ENCODE measurements at regions of chr1 and their contacts with region 1.

Region 1: DNA sequence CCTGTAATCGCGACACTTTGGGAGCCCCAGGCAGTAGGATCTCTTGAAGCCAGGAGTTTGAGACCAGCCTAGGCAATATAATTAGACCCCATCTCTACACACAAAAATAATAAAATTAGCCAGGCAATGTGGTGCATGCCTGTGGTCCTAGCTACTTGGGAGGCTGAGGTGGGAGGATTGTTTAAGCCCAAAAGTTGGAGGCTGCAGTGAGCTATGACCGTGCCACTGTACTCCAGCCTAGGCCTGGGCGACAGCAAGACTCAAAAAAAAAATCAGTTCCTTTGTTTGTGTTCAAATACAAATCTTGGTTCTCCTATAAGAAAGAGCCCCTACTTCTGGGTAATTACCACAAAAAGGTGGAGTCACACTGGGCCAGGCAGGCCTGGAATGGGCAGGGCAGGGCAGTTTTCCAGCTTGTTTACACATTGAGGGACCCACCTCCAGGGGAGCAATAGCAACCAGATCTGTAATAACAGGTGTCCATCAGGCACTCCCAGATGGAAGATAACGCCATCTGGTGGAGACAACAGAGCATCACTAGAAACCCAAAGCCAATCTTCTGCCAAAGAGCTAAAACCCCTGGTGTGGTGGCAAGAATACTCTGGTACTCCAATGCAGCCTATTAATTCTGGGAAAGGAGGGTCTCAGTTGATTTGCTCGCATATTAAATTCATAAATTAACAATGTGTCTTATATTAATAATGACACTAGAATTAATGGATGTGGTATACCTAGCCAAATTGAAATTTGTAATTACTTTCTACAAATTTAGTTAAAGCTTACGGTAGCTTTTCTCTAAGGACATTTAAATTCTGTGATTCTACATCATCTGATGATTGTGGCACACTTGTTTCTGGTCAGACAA is 13.2 kb downstream of the PPP1R15B start:
- DNase-seq: peak; percentile 81
- ATAC-seq: peak; percentile 100
- H3K4me3 Mint-ChIP-seq: no peak overlapping the region
- H3K27ac Mint-ChIP-seq: no peak overlapping the region
- H3K4me1 Mint-ChIP-seq: no peaks in the 10 kb centered on the region
- H3K27me3 Mint-ChIP-seq: no peaks in the 10 kb centered on the region; the same call in 1 of the 2 replicates
- CTCF ChIP-seq: peak; percentile 72

Region 2: GRCh38 chr1:204018463-204018862 is 380.0 kb before region 1 on chr1:
- CTCF ChIA-PET with region 1: no interaction called
- POLR2A ChIA-PET with region 1: no interaction called
- DNase-seq: no peak
- ATAC-seq: peak; percentile 47
- H3K4me3 Mint-ChIP-seq: no peak overlapping the region
- H3K27ac Mint-ChIP-seq: no peak overlapping the region
- H3K4me1 Mint-ChIP-seq: peaks cover 30% of the 10 kb centered on the region
- H3K27me3 Mint-ChIP-seq: 0 out of 2 replicates have a peak, but pooled peaks cover 6% of the 10 kb centered on the region
- CTCF ChIP-seq: no peak

Region 3: DNA sequence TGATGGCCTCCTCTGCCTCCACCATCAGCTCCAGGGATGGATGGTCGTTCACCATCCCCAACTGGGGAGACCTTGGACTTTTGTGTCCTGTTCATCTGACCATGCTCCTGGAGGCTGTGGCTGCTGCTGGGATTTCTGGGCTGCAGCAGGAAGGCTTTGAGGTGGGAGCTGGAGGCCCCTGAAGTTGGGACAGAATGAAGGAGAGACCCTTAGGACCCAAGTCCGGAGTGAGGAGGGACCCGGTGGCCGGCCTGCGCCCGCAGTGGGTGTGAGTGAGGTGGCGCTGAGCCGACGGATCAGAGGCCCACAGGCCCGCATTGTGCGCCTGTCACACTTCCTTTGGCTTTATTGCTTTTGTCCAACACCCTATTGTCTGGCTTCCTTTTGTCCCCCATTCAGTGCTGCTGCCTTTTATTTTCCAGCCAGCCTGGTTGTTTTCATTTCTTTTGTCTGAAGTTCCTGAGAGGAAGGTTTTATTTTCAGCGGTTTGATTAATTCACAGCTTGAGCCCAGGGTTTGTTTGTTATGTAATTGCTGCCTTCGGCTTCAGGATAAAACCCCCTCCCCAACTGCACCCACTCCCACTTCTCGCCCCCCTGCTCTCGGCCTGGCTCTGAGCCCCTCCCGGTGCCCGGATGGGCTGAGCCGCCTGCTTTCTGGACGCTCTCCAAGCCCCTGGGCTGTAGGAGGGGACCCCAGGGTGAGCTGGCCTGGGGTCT is 289.9 kb before region 1 on chr1:
- CTCF ChIA-PET with region 1: no interaction called
- POLR2A ChIA-PET with region 1: no interaction called
- DNase-seq: peak; percentile 66
- ATAC-seq: peak; percentile 76
- H3K4me3 Mint-ChIP-seq: peak overlapping the region; percentile 57
- H3K27ac Mint-ChIP-seq: peak overlapping the region; percentile 96
- H3K4me1 Mint-ChIP-seq: peaks cover 79% of the 10 kb centered on the region
- H3K27me3 Mint-ChIP-seq: no peaks in the 10 kb centered on the region
- CTCF ChIP-seq: no peak

Region 4: GRCh38 chr1:204198151-204198994 is 200.1 kb before region 1 on chr1:
- CTCF ChIA-PET with region 1: interaction called, 12 read pairs
- POLR2A ChIA-PET with region 1: no interaction called
- DNase-seq: no peak
- ATAC-seq: peak; percentile 48
- H3K4me3 Mint-ChIP-seq: no peak overlapping the region
- H3K27ac Mint-ChIP-seq: no peak overlapping the region; the same call in 1 of the 2 replicates
- H3K4me1 Mint-ChIP-seq: peaks cover 12% of the 10 kb centered on the region
- H3K27me3 Mint-ChIP-seq: peaks cover 7% of the 10 kb centered on the region
- CTCF ChIP-seq: no peak

Region 5: GRCh38 chr1:204278254-204278653 is 120.2 kb before region 1 on chr1:
- CTCF ChIA-PET with region 1: interaction called, 14 read pairs
- POLR2A ChIA-PET with region 1: no interaction called
- DNase-seq: no peak
- ATAC-seq: no peak
- H3K4me3 Mint-ChIP-seq: no peak overlapping the region
- H3K27ac Mint-ChIP-seq: no peak overlapping the region
- H3K4me1 Mint-ChIP-seq: peaks cover 13% of the 10 kb centered on the region
- H3K27me3 Mint-ChIP-seq: no peaks in the 10 kb centered on the region
- CTCF ChIP-seq: no peak

Region 6: DNA sequence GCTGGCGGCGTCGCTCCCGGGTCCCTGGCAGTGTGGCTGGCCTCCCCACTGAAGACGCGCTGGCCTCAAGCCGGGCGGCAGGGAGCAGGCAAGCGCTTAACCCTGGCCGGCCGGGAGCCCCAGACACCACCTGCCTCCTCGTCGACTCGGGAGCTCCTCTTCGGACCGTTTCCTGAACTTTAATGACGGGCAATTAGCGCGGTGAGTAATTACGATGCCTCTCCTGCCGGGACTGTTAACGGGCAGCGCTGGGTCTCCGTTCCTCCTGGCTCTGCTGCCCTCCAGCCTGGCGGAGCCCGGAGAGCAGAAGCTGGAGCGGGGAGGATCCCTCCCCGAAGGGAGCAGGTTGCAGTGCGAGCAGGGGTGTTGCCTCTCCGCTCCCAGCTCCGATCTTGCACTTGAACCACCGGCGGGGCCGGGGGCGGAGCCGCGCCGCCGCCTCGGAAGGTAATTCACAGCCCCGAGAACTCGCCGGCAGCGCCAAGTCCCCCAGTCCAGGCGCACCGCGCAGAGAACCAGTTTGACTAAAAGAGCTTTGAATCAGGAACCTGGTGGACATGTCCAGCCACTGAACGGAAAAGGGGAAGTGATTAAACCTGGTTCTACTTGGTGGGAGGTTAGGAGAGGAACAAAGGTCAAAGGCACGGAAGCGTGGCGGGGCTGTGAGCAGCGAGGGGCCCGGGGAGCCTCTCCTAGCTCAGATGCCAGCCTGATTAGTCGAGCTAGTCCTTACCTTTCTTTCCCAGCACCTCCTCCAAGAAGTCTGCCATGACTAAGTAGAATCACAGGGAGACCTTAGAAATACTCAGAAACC is 20.4 kb before region 1 on chr1:
- CTCF ChIA-PET with region 1: interaction called, 105 read pairs
- POLR2A ChIA-PET with region 1: interaction called, 8 read pairs
- DNase-seq: peak; percentile 72
- ATAC-seq: peak; percentile 85
- H3K4me3 Mint-ChIP-seq: peak overlapping the region; percentile 85
- H3K27ac Mint-ChIP-seq: peak overlapping the region; percentile 82; the same call in 1 of the 2 replicates
- H3K4me1 Mint-ChIP-seq: peaks cover 9% of the 10 kb centered on the region
- H3K27me3 Mint-ChIP-seq: peaks cover 36% of the 10 kb centered on the region
- CTCF ChIP-seq: no peak

Region 7: GRCh38 chr1:204446370-204447111 is 48.1 kb after region 1 on chr1:
- CTCF ChIA-PET with region 1: interaction called, 34 read pairs
- POLR2A ChIA-PET with region 1: no interaction called
- DNase-seq: peak; percentile 90
- ATAC-seq: peak; percentile 88
- H3K4me3 Mint-ChIP-seq: no peak overlapping the region
- H3K27ac Mint-ChIP-seq: peak overlapping the region; percentile 84
- H3K4me1 Mint-ChIP-seq: peaks cover 35% of the 10 kb centered on the region
- H3K27me3 Mint-ChIP-seq: no peaks in the 10 kb centered on the region
- CTCF ChIP-seq: peak; percentile 57

Region 8: DNA sequence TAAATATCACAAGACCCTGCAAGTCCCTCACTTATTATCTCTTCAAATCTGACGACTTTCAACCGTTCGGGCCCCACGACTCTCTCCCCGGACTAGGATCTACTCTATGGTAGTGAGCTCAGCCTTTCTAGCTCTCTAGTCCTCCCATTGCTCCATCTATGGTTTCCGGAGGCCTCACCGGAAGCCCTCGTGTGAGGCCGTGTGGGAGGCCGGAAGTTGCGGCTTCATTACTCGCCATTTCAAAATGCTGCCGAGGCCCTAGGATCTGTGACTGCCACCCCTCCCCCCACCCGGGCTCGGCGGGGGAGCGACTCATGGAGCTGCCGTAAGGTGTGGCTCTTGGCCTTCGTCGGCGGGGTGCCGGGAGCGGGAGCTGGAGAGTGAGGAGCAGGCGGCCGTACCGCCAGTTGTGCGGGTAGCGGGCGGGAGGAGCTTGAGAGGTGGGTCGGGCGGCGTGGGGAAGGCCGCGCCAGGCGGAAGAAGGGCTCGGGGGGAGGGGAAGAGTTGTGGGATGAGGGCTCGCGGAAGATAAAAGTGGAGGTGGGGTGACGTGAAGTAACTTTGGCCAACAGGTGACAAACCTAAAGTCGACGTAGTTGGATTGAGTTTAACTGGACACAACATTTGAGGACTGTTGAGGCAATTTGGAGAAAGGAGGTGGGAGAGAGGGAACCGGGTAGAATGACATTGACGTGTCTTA is 117.9 kb after region 1 on chr1 and contains the start of gene MDM4:
- CTCF ChIA-PET with region 1: interaction called, 14 read pairs
- POLR2A ChIA-PET with region 1: interaction called, 6 read pairs
- DNase-seq: peak; percentile 91
- ATAC-seq: peak; percentile 98
- H3K4me3 Mint-ChIP-seq: no peak within 1 kb of the TSS
- H3K27ac Mint-ChIP-seq: no peak within 1 kb of the TSS
- H3K4me1 Mint-ChIP-seq: peaks cover 12% of the 10 kb centered on the region
- H3K27me3 Mint-ChIP-seq: peaks cover under 1% of the 10 kb centered on the region; the same call in 1 of the 2 replicates
- CTCF ChIP-seq: no peak
- total RNA-seq, gene MDM4: 73.5 to 76.2 TPM (median 74.1 TPM) in 3 replicates

Region 9: GRCh38 chr1:204828338-204828850 is 429.9 kb after region 1 on chr1:
- CTCF ChIA-PET with region 1: no interaction called
- POLR2A ChIA-PET with region 1: no interaction called
- DNase-seq: peak; percentile 88
- ATAC-seq: peak; percentile 82
- H3K4me3 Mint-ChIP-seq: peak overlapping the region; percentile 73
- H3K27ac Mint-ChIP-seq: no peak overlapping the region
- H3K4me1 Mint-ChIP-seq: peaks cover 34% of the 10 kb centered on the region
- H3K27me3 Mint-ChIP-seq: peaks cover 22% of the 10 kb centered on the region
- CTCF ChIP-seq: no peak

Measured in WTC11 (cell line).